ENCODE measurements at regions of chr3 and their contacts with region 1.

Region 1: DNA sequence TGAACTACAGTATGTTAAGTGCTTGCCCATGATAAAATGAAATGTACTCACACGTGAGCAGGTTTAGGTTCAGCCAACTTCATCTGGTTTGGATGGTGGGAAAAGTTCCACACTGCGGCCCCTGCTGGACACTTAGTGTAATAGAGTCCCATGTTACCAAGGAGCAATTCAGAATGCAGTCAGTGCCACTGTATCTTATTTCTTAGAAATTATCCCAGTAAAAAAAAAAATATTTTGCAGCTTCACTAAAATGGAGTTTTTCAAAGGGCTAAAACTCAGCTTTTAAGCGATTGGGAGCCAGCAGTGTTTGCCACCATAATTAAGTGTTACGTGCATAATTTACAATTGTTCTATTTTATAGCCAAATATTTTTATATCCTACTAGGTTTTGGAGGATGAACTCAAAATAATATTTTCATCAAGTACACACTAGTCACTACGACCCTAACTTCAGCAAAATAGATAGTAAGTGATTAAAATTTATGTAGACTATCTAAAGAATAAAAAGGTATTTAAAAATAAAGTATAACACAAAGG is 371.7 kb upstream of the GBE1 start:
- DNase-seq: peak; percentile 43 to 65
- ATAC-seq: peak; percentile 77 to 92; a peak in 5 of 6 replicates
- H3K4me3 ChIP-seq: no peak overlapping the region
- H3K27ac ChIP-seq: no peak overlapping the region
- H3K4me1 ChIP-seq: peaks cover 7% of the 10 kb centered on the region; the same call in 2 of the 3 replicates
- CTCF ChIP-seq: peak; percentile 77
- EP300 ChIP-seq: no peak
- POLR2A ChIP-seq: no peak
- RAD21 ChIP-seq: peak; percentile 66 to 71

Region 2: DNA sequence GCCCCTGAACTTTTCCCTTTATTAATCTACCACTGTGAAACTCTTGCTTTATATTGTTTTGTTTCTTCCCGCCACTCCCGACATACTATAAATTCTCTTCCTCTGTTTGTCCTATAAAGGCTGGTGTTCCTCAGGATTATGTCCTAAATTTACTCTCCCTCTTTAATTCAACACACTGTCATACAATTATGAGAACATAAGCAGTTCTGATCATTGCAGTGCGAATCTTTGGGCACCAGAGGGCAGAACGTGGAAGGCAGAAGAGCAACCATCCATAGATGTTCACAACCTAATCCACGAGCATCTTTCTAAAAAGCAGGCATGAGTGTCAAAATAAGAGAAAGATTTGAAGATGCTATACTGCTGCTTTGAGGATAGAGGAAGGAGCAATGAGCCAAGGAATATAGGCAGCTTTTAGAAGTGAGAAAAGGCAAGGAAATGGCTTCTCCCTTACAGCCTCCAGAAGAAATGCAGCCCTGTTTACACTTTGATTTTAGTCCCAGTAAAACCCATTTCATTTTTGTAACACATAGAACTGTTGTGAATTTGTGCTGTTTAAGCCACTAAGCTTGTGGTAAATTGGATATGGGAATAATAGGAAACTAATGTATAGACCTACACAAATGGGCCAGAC is 551.1 kb before region 1 on chr3:
- CTCF ChIA-PET with region 1: interaction called, 10 read pairs
- POLR2A ChIA-PET with region 1: no interaction called
- DNase-seq: peak in 1 of 2 experiments; percentile 58
- ATAC-seq: peak; percentile 86 to 91; a peak in 4 of 6 replicates
- H3K4me3 ChIP-seq: no peak overlapping the region
- H3K27ac ChIP-seq: no peak overlapping the region
- H3K4me1 ChIP-seq: no peaks in the 10 kb centered on the region
- CTCF ChIP-seq: peak; percentile 77
- EP300 ChIP-seq: no peak
- POLR2A ChIP-seq: no peak
- RAD21 ChIP-seq: peak; percentile 73 to 75

Region 3: GRCh38 chr3:82122554-82123345 is 10.4 kb before region 1 on chr3:
- CTCF ChIA-PET with region 1: interaction called, 11 read pairs
- POLR2A ChIA-PET with region 1: no interaction called
- DNase-seq: no peak
- ATAC-seq: no peak
- H3K4me3 ChIP-seq: no peak overlapping the region
- H3K27ac ChIP-seq: no peak overlapping the region
- H3K4me1 ChIP-seq: no peaks in the 10 kb centered on the region
- CTCF ChIP-seq: no peak
- EP300 ChIP-seq: no peak
- POLR2A ChIP-seq: no peak
- RAD21 ChIP-seq: no peak

Region 4: GRCh38 chr3:82143661-82144412 is 10.7 kb after region 1 on chr3:
- CTCF ChIA-PET with region 1: interaction called, 22 read pairs
- POLR2A ChIA-PET with region 1: no interaction called
- DNase-seq: no peak
- ATAC-seq: no peak
- H3K4me3 ChIP-seq: no peak overlapping the region
- H3K27ac ChIP-seq: no peak overlapping the region
- H3K4me1 ChIP-seq: no peaks in the 10 kb centered on the region
- CTCF ChIP-seq: no peak
- EP300 ChIP-seq: no peak
- POLR2A ChIP-seq: no peak
- RAD21 ChIP-seq: no peak

Measured in A549 (cell line).